Activated CD4-positive, alpha-beta memory T cell treated with anti-CD3 and anti-CD28 coated beads, Interleukin-2, amount 10 ng/mL, durations not matched to agents 7 days and 5 days (primary cell): ENCODE measurements at regions of chr1 and their contacts with region 1.

Region 1: DNA sequence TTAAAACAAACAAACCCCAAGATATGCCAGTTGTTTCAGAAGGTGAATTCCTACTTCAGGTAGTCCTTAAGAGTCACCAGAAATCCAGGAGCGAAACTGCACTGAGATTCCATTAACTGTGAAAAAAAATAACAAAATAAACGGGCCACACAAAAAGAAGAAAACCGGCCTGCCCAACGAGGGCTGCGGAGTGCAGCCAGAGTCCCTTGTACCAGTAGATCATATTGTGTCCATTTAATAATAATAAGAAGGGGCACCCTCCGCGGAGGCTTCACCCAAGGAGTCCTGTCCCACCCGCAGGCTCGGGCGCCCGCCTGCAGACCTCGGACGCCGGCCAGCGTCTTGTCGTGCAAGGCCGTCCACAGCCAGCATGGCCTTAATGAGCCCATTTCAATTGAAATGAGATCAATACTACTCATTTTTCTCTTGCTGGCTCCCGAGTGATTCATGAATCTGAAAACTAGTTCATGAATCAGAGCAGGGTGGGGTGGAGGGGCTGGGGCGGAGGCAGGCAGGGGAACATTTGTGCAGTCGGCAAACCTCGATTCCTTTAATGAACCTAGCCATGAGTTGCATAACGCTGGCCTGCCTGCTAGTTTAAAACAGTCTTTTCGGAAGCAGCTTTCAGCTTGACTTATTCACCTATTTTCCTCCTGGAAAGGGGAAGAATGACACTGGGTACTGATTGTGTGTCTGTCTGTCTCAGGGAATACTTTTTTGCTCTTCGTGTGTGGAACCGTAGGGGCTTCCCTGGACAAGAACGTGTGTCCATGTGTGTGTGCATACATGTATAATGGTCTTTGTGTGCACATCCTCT is 113.1 kb upstream of the IRF2BP2 start:
- DNase-seq: peak; percentile 51
- H3K4me3 Mint-ChIP-seq: peak overlapping the region; percentile 76
- H3K27ac Mint-ChIP-seq: peak overlapping the region; percentile 89
- H3K4me1 Mint-ChIP-seq: peaks cover 67% of the 10 kb centered on the region
- H3K27me3 Mint-ChIP-seq: no peaks in the 10 kb centered on the region

Region 2: GRCh38 chr1:234478481-234479309 is 244.4 kb before region 1 on chr1 and contains the start of gene TARBP1:
- CTCF ChIA-PET with region 1: no interaction called
- POLR2A ChIA-PET with region 1: interaction called, 11 read pairs
- DNase-seq: peak; percentile 76
- H3K4me3 Mint-ChIP-seq: peak within 1 kb of the TSS; percentile 78
- H3K27ac Mint-ChIP-seq: peak within 1 kb of the TSS; percentile 59
- H3K4me1 Mint-ChIP-seq: peaks cover 37% of the 10 kb centered on the region
- H3K27me3 Mint-ChIP-seq: peaks cover 10% of the 10 kb centered on the region
- total RNA-seq, gene TARBP1: 24.8 to 25.0 TPM

Region 3: DNA sequence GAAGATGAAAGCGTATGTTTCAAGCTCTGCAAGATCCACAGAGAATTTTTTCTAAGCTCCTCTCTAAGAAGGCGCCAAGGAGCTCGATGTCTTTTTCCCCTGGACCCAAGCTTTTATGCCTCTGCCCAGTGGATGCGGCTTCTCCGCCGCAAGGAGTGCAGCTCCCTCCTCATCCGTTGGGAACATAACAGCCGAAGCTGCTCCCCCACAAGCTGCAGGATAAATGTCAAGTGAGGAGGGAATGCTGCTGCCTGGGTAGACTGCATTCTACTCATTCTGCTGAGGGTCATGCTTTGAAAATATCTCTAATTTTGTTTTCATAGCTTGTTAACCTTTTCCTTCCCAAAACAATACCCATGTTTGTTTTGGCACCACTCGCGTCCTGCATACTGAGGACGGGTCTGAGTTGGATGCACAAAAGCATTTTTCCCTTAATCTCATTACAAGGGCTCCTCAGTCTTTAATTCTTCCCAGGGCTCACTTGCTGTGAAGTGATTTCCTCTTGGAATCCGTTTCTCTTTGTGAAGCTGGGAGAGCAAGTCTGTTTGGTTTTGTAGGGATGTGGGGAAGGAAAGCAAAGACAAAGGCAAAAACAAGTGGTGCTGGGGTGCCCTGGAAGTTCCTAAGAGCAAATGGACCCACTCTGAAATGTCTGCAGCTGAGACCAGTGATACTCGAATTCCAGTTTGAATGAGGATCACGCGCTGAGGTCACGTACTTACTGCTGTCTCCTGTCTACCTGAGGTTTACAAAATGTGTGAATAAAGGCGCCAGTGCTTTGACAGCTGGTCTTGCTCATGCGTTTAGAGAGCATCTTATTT is 20.9 kb after region 1 on chr1:
- CTCF ChIA-PET with region 1: no interaction called
- POLR2A ChIA-PET with region 1: no interaction called
- DNase-seq: no peak
- H3K4me3 Mint-ChIP-seq: no peak overlapping the region
- H3K27ac Mint-ChIP-seq: no peak overlapping the region
- H3K4me1 Mint-ChIP-seq: no peaks in the 10 kb centered on the region
- H3K27me3 Mint-ChIP-seq: peaks cover 2% of the 10 kb centered on the region

Region 4: DNA sequence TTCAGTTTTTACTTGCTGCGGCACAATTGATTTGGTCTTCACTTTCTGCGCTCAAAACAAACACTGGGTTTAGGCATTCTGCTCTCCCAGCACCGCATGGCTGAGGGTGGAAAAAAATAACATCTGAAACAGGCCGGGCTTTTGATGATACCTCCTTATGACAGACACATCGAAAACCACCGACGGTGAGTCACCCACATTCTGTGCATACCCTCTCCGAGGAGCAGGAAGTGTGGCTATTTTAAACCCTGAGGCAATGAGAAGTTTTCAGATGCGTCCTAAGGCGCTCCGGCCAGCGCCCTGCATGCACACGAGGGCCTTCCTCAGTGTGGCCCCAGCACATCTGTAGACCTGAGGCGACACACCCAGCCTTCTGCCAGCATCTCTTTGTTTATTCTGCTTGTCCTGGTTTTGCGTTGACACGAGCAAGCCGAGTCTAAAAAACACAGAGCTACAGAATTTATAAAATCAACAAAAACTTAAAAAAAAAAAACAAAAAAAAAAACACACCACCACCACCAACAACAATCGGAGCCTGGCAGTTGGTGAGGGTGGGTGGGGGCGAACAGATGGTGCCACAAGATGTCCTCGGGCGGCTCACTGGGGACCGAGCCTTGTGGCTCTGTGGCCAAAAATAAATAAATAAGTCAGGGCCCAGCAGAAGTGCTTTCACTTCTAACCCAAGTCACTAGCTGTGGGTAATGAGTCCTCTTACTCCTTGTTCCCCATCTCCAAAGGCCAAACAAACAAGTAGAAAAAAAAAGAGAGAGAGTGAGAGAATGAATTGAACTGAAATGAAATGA is 49.4 kb after region 1 on chr1:
- CTCF ChIA-PET with region 1: interaction called, 4 read pairs
- POLR2A ChIA-PET with region 1: interaction called, 23 read pairs
- DNase-seq: peak; percentile 91
- H3K4me3 Mint-ChIP-seq: peak overlapping the region; percentile 31
- H3K27ac Mint-ChIP-seq: peak overlapping the region; percentile 95
- H3K4me1 Mint-ChIP-seq: peaks cover 55% of the 10 kb centered on the region
- H3K27me3 Mint-ChIP-seq: no peaks in the 10 kb centered on the region

Region 5: DNA sequence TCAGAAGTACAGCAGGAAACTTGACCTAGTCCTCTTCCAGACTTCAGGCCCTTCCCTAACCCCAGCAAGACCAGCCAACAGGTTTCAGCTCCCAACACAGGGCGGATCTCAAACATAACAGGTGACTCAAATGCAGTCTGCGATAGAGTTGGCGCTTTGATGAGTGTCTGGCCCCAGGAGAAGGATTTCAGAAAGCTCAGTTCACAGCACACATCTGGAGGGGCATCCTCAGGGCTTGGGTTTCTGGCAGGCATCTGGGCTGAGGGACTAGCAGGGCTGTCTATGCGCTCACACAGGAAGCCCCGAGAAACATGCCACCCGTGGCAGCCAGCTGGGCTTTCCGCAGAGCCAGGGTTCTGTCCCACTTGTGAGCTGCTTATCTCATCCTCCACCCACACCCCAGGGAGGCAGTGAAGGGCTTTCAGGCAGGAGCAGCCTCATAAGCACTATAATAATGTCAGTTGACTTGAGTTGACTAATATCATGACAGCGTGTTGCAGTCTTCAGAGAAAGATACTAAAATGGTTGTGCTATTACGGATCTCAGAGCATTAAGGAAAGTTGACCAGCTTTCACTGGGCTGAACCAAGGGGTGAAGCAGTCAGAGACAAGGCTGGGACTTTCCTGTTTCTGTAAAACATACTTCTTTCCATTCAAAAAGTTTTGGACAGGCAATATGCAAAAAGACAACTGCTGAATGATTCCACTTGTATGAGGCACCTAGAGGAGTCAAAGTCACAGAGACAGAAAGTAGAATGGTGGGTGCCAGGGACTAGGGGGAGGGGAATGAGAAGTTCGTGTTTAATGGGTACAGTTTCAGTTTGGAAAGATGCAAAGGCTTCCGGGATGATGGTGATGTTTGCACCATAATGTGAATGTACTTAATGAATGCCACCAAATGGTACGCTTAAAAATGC is 119.9 kb after region 1 on chr1:
- CTCF ChIA-PET with region 1: no interaction called
- POLR2A ChIA-PET with region 1: interaction called, 23 read pairs
- DNase-seq: peak; percentile 73
- H3K4me3 Mint-ChIP-seq: peak overlapping the region; percentile 61
- H3K27ac Mint-ChIP-seq: peak overlapping the region; percentile 90
- H3K4me1 Mint-ChIP-seq: peaks cover 79% of the 10 kb centered on the region
- H3K27me3 Mint-ChIP-seq: peaks cover 2% of the 10 kb centered on the region